GM23248 (cell line): ENCODE measurements at regions of chr6 and their contacts with region 1.

Region 1: DNA sequence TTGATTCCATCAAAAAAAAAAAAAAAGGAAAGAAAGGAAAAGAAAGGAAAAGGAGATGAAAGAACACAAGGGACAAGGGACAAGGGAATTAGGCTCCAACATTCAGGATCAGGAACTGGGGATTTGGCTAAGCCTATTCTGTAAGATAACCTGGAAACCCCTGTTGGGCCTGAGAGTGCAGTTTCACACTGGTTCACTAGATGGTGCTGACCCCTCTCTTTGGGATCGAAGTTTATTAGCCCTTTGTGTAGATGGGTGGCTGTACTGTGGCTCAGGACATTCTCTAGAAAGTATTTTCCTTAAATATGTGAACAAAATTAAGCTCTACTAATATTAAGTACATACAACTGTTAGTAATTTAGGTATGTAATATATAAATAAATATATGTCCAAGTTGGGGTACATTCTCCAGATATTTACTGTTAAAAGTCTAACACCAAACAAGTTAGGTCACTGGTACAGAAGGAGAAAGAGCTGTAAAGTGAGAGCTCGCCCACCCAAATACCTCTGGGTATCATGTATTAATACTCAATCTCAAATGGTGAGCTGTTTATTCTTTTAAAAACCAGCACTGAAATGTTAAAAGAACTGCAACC is 6.3 kb downstream of the OR2A4 start:
- DNase-seq: peak; percentile 82
- H3K4me3 ChIP-seq: no peak overlapping the region
- H3K27ac ChIP-seq: no peak overlapping the region
- H3K4me1 ChIP-seq: no peaks in the 10 kb centered on the region
- H3K27me3 ChIP-seq: no peaks in the 10 kb centered on the region

Region 2: DNA sequence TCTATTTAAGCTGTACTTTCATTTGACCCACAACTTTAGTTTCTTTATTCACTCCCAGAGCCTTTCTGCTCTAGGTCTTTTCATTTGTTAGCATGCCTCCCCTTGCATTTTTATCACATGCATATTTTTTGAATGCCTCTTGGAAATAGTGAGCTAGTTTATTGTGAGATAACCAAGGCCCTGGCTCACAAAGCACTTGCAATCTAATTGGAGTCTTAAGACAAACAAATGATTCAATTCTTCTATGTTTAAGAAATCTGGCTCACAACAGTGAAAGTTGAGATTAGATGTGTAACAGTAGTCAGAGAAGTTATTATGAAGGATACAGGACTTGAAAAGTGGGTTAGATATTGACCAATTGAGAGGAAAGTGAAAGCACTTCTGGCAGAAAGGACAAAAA is 533.0 kb after region 1 on chr6:
- in situ Hi-C with region 1: loop called (anchors 25 kb)
- DNase-seq: peak; percentile 69
- H3K4me3 ChIP-seq: no peak overlapping the region
- H3K27ac ChIP-seq: peak overlapping the region; percentile 12
- H3K4me1 ChIP-seq: peaks cover 13% of the 10 kb centered on the region
- H3K27me3 ChIP-seq: no peaks in the 10 kb centered on the region